CD4-positive, alpha-beta T cell (primary cell): ENCODE measurements at regions of chr19 and their contacts with region 1.

Region 1: GRCh38 chr19:54023191-54023590 is 31.8 kb downstream of the CACNG6 start:
- DNase-seq: no peak
- ATAC-seq: no peak
- H3K4me3 ChIP-seq: no peak overlapping the region
- H3K4me3 Mint-ChIP-seq: no peak overlapping the region
- H3K27ac ChIP-seq: no peak overlapping the region
- H3K27ac Mint-ChIP-seq: no peak overlapping the region
- H3K4me1 ChIP-seq: peaks cover 6% of the 10 kb centered on the region
- H3K4me1 Mint-ChIP-seq: no peaks in the 10 kb centered on the region
- H3K27me3 ChIP-seq: peaks cover 10 to 22% of the 10 kb centered on the region in 2 experiments
- H3K27me3 Mint-ChIP-seq: peaks cover 48% of the 10 kb centered on the region
- CTCF ChIP-seq: no peak

Region 2: GRCh38 chr19:53772943-53773342 is 250.2 kb before region 1 on chr19:
- CTCF ChIA-PET with region 1: no interaction called
- POLR2A ChIA-PET with region 1: no interaction called
- intact Hi-C with region 1: loop called in 1 of 2 experiments (anchors 5 kb)
- DNase-seq: peak in 12 of 14 experiments; percentile 10 to 73 (median 32)
- ATAC-seq: no peak
- H3K4me3 ChIP-seq: no peak overlapping the region
- H3K4me3 Mint-ChIP-seq: no peak overlapping the region
- H3K27ac ChIP-seq: no peak overlapping the region
- H3K27ac Mint-ChIP-seq: no peak overlapping the region
- H3K4me1 ChIP-seq: no peaks in the 10 kb centered on the region
- H3K4me1 Mint-ChIP-seq: no peaks in the 10 kb centered on the region
- H3K27me3 ChIP-seq: no peaks in the 10 kb centered on the region
- H3K27me3 Mint-ChIP-seq: peaks cover 7% of the 10 kb centered on the region
- CTCF ChIP-seq: peak; percentile 69

Region 3: GRCh38 chr19:53792721-53793433 is 230.3 kb before region 1 on chr19:
- CTCF ChIA-PET with region 1: interaction called, 8 read pairs
- POLR2A ChIA-PET with region 1: no interaction called
- intact Hi-C with region 1: loop called (anchors 1 to 5 kb)
- DNase-seq: peak; percentile 54 to 87 (median 68)
- ATAC-seq: peak; percentile 100
- H3K4me3 ChIP-seq: no peak overlapping the region
- H3K4me3 Mint-ChIP-seq: no peak overlapping the region
- H3K27ac ChIP-seq: no peak overlapping the region
- H3K27ac Mint-ChIP-seq: no peak overlapping the region
- H3K4me1 ChIP-seq: no peaks in the 10 kb centered on the region
- H3K4me1 Mint-ChIP-seq: no peaks in the 10 kb centered on the region
- H3K27me3 ChIP-seq: no peaks in the 10 kb centered on the region
- H3K27me3 Mint-ChIP-seq: peaks cover 16% of the 10 kb centered on the region
- CTCF ChIP-seq: peak; percentile 94

Region 4: GRCh38 chr19:53844849-53845246 is 178.3 kb before region 1 on chr19:
- CTCF ChIA-PET with region 1: interaction called, 6 read pairs
- POLR2A ChIA-PET with region 1: no interaction called
- intact Hi-C with region 1: loop called (anchors 1 kb)
- DNase-seq: peak in 3 of 14 experiments; percentile 19 to 62 (median 59)
- ATAC-seq: no peak
- H3K4me3 ChIP-seq: no peak overlapping the region
- H3K4me3 Mint-ChIP-seq: no peak overlapping the region
- H3K27ac ChIP-seq: no peak overlapping the region
- H3K27ac Mint-ChIP-seq: no peak overlapping the region
- H3K4me1 ChIP-seq: peaks cover 7% of the 10 kb centered on the region
- H3K4me1 Mint-ChIP-seq: peaks cover 6% of the 10 kb centered on the region
- H3K27me3 ChIP-seq: peaks cover 0 to 6% of the 10 kb centered on the region in 2 experiments
- H3K27me3 Mint-ChIP-seq: peaks cover 37% of the 10 kb centered on the region
- CTCF ChIP-seq: no peak

Region 5: DNA sequence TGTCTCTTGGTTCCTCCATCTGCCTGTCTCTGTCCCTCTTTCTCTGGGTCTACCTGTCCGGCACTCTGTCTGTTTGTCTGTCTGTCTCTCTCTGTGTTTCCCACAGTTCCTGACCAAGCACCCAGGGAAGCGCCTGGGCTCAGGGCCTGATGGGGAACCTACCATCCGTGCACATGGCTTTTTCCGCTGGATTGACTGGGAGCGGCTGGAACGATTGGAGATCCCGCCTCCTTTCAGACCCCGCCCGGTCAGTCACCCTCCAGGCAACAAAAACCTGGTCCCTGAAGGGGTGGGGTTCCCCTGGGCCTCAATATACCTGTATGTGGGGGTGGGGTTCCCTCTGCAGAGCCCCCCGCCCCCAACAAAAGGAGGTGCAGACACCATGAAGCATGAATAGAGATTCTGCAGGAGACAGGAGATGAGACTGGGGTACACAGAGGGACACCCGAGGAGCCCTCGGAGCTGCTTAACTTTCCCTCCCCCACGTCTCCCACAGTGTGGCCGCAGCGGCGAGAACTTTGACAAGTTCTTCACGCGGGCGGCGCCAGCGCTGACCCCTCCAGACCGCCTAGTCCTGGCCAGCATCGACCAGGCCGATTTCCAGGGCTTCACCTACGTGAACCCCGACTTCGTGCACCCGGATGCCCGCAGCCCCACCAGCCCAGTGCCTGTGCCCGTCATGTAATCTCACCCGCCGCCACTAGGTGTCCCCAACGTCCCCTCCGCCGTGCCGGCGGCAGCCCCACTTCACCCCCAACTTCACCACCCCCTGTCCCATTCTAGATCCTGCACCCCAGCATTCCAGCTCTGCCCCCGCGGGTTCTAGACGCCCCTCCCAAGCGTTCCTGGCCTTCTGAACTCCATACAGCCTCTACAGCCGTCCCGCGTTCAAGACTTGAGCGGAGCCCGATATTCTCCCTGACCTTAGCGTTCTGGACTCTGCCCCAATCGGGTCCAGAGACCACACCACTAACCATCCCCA is 116.7 kb before region 1 on chr19:
- CTCF ChIA-PET with region 1: no interaction called
- POLR2A ChIA-PET with region 1: no interaction called
- intact Hi-C with region 1: loop called in 1 of 2 experiments (anchors 5 kb)
- DNase-seq: peak; percentile 42 to 82 (median 62)
- ATAC-seq: peak; percentile 58
- H3K4me3 ChIP-seq: no peak overlapping the region
- H3K4me3 Mint-ChIP-seq: no peak overlapping the region
- H3K27ac ChIP-seq: no peak overlapping the region
- H3K27ac Mint-ChIP-seq: no peak overlapping the region
- H3K4me1 ChIP-seq: peaks cover 34% of the 10 kb centered on the region
- H3K4me1 Mint-ChIP-seq: peaks cover 28% of the 10 kb centered on the region
- H3K27me3 ChIP-seq: peaks cover 57 to 62% of the 10 kb centered on the region in 2 experiments
- H3K27me3 Mint-ChIP-seq: peaks cover 96% of the 10 kb centered on the region
- CTCF ChIP-seq: peak; percentile 78

Region 6: GRCh38 chr19:54047616-54048015 is 24.4 kb after region 1 on chr19:
- CTCF ChIA-PET with region 1: no interaction called
- POLR2A ChIA-PET with region 1: no interaction called
- intact Hi-C with region 1: no loop called
- DNase-seq: peak in 1 of 14 experiments; percentile 28
- ATAC-seq: no peak
- H3K4me3 ChIP-seq: no peak overlapping the region
- H3K4me3 Mint-ChIP-seq: no peak overlapping the region
- H3K27ac ChIP-seq: no peak overlapping the region
- H3K27ac Mint-ChIP-seq: no peak overlapping the region
- H3K4me1 ChIP-seq: no peaks in the 10 kb centered on the region
- H3K4me1 Mint-ChIP-seq: no peaks in the 10 kb centered on the region
- H3K27me3 ChIP-seq: peaks cover 8 to 13% of the 10 kb centered on the region in 2 experiments
- H3K27me3 Mint-ChIP-seq: peaks cover 58% of the 10 kb centered on the region
- CTCF ChIP-seq: no peak

Region 7: DNA sequence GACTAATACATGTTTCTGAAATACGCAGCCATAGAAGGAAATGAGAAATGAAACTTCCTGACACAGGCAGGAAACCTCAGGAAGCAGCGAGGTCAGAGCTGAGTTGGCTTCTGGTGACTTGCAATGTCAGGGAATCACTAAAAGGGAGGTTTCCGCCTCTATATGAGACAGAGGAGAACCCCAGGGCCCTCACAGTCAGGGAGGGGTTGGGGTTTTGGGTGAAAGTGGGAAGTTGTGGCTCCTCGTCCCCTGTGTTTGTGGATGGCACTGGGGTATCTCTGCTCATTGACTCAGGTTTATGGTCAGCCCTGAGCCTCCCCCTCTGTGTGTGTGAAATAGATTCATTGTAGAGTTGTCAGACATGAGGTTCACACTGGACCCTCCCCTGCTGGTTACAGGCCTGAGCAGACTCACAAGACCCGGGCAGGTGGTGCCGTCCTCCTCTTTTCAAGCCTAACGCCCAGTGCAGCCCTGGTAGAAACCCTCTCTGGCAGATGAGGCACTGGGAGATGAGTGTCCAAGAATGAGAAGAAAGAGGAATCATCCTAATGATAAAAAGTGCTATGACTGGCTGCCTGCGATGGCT is 224.9 kb after region 1 on chr19:
- CTCF ChIA-PET with region 1: no interaction called
- POLR2A ChIA-PET with region 1: no interaction called
- intact Hi-C with region 1: no loop called
- DNase-seq: peak in 4 of 14 experiments; percentile 29 to 75 (median 60)
- ATAC-seq: peak; percentile 52
- H3K4me3 ChIP-seq: no peak overlapping the region
- H3K4me3 Mint-ChIP-seq: peak overlapping the region; percentile 2
- H3K27ac ChIP-seq: peak overlapping the region in 1 of 2 donors; percentile 29
- H3K27ac Mint-ChIP-seq: peak overlapping the region; percentile 1
- H3K4me1 ChIP-seq: peaks cover 16% of the 10 kb centered on the region
- H3K4me1 Mint-ChIP-seq: peaks cover 15% of the 10 kb centered on the region
- H3K27me3 ChIP-seq: no peaks in the 10 kb centered on the region
- H3K27me3 Mint-ChIP-seq: no peaks in the 10 kb centered on the region
- CTCF ChIP-seq: no peak